Activated CD4-positive, alpha-beta T cell treated with anti-CD3 and anti-CD28 coated beads for 36 hours (primary cell): ENCODE measurements at regions of chr6 and their contacts with region 1.

Region 1: GRCh38 chr6:391559-392440 is at the start of gene IRF4:
- DNase-seq: peak; percentile 87
- ATAC-seq: peak; percentile 52
- H3K4me3 Mint-ChIP-seq: peak within 1 kb of the TSS; percentile 94
- H3K27ac Mint-ChIP-seq: peak within 1 kb of the TSS; percentile 98
- H3K4me1 Mint-ChIP-seq: peaks cover 48% of the 10 kb centered on the region
- H3K27me3 Mint-ChIP-seq: peaks cover 3% of the 10 kb centered on the region
- total RNA-seq, gene IRF4: 601 to 617 TPM

Region 2: GRCh38 chr6:188821-189655 is 202.8 kb before region 1 on chr6:
- CTCF ChIA-PET with region 1: interaction called, 18 read pairs
- POLR2A ChIA-PET with region 1: interaction called, 5 read pairs
- intact Hi-C with region 1: loop called (anchors 1 kb)
- DNase-seq: peak; percentile 92
- ATAC-seq: peak; percentile 78
- H3K4me3 Mint-ChIP-seq: no peak overlapping the region
- H3K27ac Mint-ChIP-seq: peak overlapping the region; percentile 95
- H3K4me1 Mint-ChIP-seq: peaks cover 52% of the 10 kb centered on the region
- H3K27me3 Mint-ChIP-seq: peaks cover 3% of the 10 kb centered on the region

Region 3: GRCh38 chr6:291697-292505 is 99.9 kb before region 1 on chr6 and contains the start of gene DUSP22:
- CTCF ChIA-PET with region 1: no interaction called
- POLR2A ChIA-PET with region 1: no interaction called
- intact Hi-C with region 1: loop called (anchors 1 to 2 kb)
- DNase-seq: peak; percentile 93
- ATAC-seq: peak; percentile 70
- H3K4me3 Mint-ChIP-seq: peak within 1 kb of the TSS; percentile 81
- H3K27ac Mint-ChIP-seq: peak within 1 kb of the TSS; percentile 93
- H3K4me1 Mint-ChIP-seq: peaks cover 58% of the 10 kb centered on the region
- H3K27me3 Mint-ChIP-seq: no peaks in the 10 kb centered on the region
- total RNA-seq, gene DUSP22: 33.2 to 33.7 TPM

Region 4: GRCh38 chr6:446418-447366 is 54.9 kb after region 1 on chr6:
- CTCF ChIA-PET with region 1: interaction called, 4 read pairs
- POLR2A ChIA-PET with region 1: interaction called, 11 read pairs
- intact Hi-C with region 1: loop called in 1 of 2 experiments (anchors 1 kb)
- DNase-seq: peak; percentile 96
- ATAC-seq: peak; percentile 77
- H3K4me3 Mint-ChIP-seq: peak overlapping the region; percentile 65
- H3K27ac Mint-ChIP-seq: peak overlapping the region; percentile 90
- H3K4me1 Mint-ChIP-seq: peaks cover 52% of the 10 kb centered on the region
- H3K27me3 Mint-ChIP-seq: no peaks in the 10 kb centered on the region

Region 5: DNA sequence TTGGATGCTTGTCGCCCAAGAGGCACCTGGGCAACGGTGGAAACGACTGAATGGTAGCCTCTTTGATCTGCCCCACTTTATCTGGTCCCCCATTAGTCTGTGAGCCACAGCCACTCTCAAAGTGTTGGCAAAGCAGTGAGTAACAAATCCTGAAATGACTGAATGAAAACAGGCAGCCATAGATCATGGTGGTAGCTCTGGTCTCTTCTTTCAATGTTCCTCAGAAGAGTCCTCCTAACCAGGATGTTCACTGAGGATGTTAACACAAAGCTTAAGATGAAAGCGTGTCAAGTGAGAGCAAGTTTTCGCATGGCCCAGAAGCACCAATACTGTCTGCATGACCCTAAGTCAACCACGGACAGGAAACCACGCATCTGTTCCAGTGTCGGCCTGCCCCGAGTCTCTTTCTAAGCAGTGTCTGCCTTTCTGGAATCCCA is 107.0 kb after region 1 on chr6:
- CTCF ChIA-PET with region 1: interaction called, 6 read pairs
- POLR2A ChIA-PET with region 1: interaction called, 32 read pairs
- intact Hi-C with region 1: loop called in 1 of 2 experiments (anchors 2 kb)
- DNase-seq: peak; percentile 81
- ATAC-seq: peak; percentile 64
- H3K4me3 Mint-ChIP-seq: peak overlapping the region; percentile 63
- H3K27ac Mint-ChIP-seq: peak overlapping the region; percentile 93
- H3K4me1 Mint-ChIP-seq: peaks cover 87% of the 10 kb centered on the region
- H3K27me3 Mint-ChIP-seq: no peaks in the 10 kb centered on the region

Region 6: DNA sequence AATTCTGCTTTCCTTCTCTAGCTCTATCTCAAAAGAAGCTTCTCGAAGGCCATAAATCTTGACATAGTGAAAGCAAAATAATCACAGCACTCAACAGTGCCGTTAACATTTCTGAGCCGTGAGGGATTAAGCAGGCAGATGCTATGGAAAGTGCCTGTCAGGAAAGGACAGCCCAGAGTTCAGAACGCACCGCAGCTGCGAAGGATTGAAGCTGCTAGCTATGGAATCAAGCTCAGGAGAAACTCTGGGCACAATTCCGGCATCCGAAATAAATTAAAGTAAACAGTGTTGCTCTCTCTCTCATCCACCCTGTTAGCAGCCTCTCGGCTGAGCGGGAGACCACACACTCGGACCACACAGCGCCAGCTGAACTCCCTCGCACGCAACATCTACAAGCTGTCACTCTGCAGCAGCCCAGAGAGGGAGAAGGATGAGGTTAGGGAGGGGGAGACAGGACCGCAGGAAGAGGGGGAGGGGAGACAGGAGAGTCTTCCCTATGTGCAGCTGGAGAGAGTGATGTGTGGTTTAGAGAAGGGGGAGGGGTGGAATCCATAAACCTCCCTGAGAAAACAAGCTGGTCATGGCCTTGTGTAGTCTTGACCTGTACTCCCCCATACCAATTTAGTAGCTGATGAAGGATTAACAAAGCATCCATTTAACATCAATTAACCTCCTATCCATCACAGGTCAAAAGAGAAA is 292.1 kb after region 1 on chr6:
- CTCF ChIA-PET with region 1: no interaction called
- POLR2A ChIA-PET with region 1: no interaction called
- intact Hi-C with region 1: loop called (anchors 2 to 5 kb)
- DNase-seq: peak; percentile 46
- ATAC-seq: peak; percentile 7
- H3K4me3 Mint-ChIP-seq: peak overlapping the region; percentile 38
- H3K27ac Mint-ChIP-seq: peak overlapping the region; percentile 61
- H3K4me1 Mint-ChIP-seq: peaks cover 53% of the 10 kb centered on the region
- H3K27me3 Mint-ChIP-seq: no peaks in the 10 kb centered on the region

Region 7: DNA sequence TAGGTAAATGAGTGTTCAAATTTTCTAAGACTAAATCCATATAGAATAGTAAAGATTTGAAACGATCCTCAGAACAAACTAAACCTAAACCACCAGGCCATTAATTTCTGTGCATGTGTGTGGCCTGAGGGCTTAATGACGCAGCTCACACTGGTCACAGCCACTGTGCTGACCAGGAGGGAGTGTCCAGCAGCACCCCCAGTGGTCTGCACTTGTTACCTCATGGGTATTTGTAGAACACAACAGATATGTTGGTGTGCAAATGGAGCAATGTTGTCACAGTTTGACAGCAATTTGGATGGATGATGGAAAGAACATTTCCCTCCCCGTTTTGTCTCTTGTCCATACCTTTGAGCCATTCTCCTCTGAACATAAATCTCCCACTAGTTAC is 423.5 kb after region 1 on chr6:
- CTCF ChIA-PET with region 1: no interaction called
- POLR2A ChIA-PET with region 1: no interaction called
- intact Hi-C with region 1: no loop called
- DNase-seq: no peak
- ATAC-seq: no peak
- H3K4me3 Mint-ChIP-seq: no peak overlapping the region
- H3K27ac Mint-ChIP-seq: no peak overlapping the region
- H3K4me1 Mint-ChIP-seq: peaks cover 27% of the 10 kb centered on the region
- H3K27me3 Mint-ChIP-seq: peaks cover 17% of the 10 kb centered on the region

Region 8: DNA sequence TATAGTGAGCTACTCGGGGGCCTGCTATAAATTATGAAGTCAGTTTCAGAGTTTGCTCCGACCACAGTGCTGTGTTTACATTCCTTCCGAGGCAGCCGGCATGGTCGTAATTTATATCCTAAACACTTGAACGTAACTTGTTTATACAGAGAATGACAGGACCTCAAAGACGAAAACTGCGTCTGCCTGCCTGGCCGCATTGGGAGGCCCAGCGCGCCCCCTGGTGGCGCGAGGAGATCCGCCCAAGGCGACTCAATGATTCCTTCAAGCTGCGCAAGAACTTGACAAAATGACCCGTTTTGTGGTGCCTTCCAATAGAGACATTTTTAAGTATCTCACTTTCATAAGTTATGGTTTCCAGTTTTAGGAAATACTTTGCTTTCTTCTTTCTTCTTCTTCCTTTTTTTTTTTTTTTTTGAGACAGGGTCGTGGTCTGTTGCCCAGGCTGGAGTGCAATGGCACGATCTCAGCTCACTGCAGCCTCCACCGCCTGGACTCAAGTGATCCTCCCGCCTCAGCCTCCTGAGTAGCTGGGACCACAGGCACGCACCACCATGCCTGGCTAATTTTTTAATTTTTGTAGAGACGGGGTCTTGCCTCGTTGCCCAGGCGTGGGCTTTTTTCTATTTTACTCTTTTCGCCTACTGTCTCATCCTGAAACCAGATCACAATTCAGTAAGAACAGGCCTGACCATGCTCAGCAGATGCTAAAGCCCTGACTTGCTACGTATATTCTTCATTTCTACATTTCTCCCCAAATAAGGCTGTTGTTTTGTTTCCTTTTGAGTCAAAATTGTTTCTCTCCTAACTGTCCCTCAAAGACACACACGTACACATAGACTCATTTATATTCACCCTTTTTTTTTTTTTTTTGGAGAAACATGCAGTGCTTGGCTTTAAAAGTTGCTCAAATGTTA is 1005.4 kb after region 1 on chr6:
- CTCF ChIA-PET with region 1: no interaction called
- POLR2A ChIA-PET with region 1: no interaction called
- intact Hi-C with region 1: loop called in 1 of 2 experiments (anchors 5 kb)
- DNase-seq: peak; percentile 85
- ATAC-seq: peak; percentile 75
- H3K4me3 Mint-ChIP-seq: no peak overlapping the region
- H3K27ac Mint-ChIP-seq: no peak overlapping the region
- H3K4me1 Mint-ChIP-seq: peaks cover 4% of the 10 kb centered on the region
- H3K27me3 Mint-ChIP-seq: peaks cover 51% of the 10 kb centered on the region